Heart right ventricle (tissue), 16 donors: ENCODE measurements at regions of chr22 and their contacts with region 1.

Region 1: GRCh38 chr22:49930739-49931412 is 12.4 kb downstream of the CRELD2 start:
- DNase-seq: peak in 1 of 2 donors; percentile 83
- ATAC-seq: peak; percentile 14 to 74 (median 46)
- H3K4me3 ChIP-seq: no peak overlapping the region
- H3K27ac ChIP-seq: peak overlapping the region in 7 of 10 donors; percentile 2 to 99 (median 44)
- H3K4me1 ChIP-seq: peaks cover 24 to 60% (median 54%) of the 10 kb centered on the region in 9 donors
- H3K27me3 ChIP-seq: peaks cover 0 to 10% (median 6%) of the 10 kb centered on the region in 7 donors
- CTCF ChIP-seq: peak; percentile 49 to 85 (median 79)

Region 2: DNA sequence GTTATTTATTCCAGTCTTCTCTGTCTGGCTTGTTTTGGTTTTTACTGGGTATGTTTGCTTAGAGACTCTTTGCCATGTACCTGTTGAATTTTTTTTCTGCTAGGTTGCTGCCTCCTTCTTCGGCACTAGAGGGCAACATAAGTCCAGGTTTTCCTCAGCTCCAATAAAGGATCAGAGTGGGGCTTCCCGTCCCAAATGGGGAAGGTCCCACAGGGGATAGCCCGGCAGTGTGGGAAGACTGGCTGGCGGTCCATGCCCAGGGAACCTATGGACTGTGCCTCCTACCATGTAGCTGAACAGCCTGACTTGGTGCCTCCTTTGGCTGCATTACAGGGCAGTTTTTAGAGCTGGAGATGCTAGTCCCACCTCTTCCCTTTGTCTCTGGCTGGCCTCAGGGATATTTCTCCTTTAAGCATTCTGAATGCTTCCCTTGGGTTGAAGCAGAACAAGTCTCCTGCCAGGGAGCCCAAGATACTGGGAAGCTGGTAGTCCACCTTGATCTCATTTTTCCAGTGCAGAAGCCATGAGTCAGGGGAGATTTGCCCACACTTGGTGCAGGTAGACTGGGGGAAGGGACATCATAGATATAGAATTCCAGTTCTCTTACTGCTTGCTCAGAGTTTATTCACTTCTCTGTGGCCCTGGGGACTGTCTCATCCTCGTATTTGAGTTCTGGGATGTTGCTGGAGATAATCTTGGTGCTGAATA is 163.4 kb before region 1 on chr22:
- intact Hi-C with region 1: loop called in 1 of 10 experiments (anchors 5 kb)
- DNase-seq: no peak
- ATAC-seq: peak in 3 of 8 donors; percentile 23 to 33 (median 24)
- H3K4me3 ChIP-seq: no peak overlapping the region
- H3K27ac ChIP-seq: no peak overlapping the region
- H3K4me1 ChIP-seq: peaks cover 0 to 10% (median 0%) of the 10 kb centered on the region in 9 donors
- H3K27me3 ChIP-seq: no peaks in the 10 kb centered on the region
- CTCF ChIP-seq: peak in 8 of 9 donors; percentile 30 to 75 (median 60)

Region 3: GRCh38 chr22:49970528-49971231 is 39.8 kb after region 1 on chr22:
- intact Hi-C with region 1: loop called in 5 of 10 experiments (anchors 2 to 5 kb)
- DNase-seq: peak; percentile 92 to 94
- ATAC-seq: peak; percentile 85 to 92 (median 90)
- H3K4me3 ChIP-seq: peak overlapping the region; percentile 35 to 60 (median 54)
- H3K27ac ChIP-seq: peak overlapping the region; percentile 8 to 99 (median 86)
- H3K4me1 ChIP-seq: peaks cover 18 to 60% (median 45%) of the 10 kb centered on the region in 9 donors
- H3K27me3 ChIP-seq: peaks cover 0 to 10% (median 0%) of the 10 kb centered on the region in 7 donors
- CTCF ChIP-seq: no peak

Region 4: GRCh38 chr22:49992921-49993648 is 62.2 kb after region 1 on chr22:
- intact Hi-C with region 1: loop called in 9 of 10 experiments (anchors 1 to 10 kb)
- DNase-seq: peak; percentile 54 to 73
- ATAC-seq: peak; percentile 73 to 90 (median 85)
- H3K4me3 ChIP-seq: no peak overlapping the region
- H3K27ac ChIP-seq: no peak overlapping the region
- H3K4me1 ChIP-seq: peaks cover 0 to 9% (median 2%) of the 10 kb centered on the region in 9 donors
- H3K27me3 ChIP-seq: no peaks in the 10 kb centered on the region
- CTCF ChIP-seq: peak; percentile 61 to 84 (median 72)

Region 5: DNA sequence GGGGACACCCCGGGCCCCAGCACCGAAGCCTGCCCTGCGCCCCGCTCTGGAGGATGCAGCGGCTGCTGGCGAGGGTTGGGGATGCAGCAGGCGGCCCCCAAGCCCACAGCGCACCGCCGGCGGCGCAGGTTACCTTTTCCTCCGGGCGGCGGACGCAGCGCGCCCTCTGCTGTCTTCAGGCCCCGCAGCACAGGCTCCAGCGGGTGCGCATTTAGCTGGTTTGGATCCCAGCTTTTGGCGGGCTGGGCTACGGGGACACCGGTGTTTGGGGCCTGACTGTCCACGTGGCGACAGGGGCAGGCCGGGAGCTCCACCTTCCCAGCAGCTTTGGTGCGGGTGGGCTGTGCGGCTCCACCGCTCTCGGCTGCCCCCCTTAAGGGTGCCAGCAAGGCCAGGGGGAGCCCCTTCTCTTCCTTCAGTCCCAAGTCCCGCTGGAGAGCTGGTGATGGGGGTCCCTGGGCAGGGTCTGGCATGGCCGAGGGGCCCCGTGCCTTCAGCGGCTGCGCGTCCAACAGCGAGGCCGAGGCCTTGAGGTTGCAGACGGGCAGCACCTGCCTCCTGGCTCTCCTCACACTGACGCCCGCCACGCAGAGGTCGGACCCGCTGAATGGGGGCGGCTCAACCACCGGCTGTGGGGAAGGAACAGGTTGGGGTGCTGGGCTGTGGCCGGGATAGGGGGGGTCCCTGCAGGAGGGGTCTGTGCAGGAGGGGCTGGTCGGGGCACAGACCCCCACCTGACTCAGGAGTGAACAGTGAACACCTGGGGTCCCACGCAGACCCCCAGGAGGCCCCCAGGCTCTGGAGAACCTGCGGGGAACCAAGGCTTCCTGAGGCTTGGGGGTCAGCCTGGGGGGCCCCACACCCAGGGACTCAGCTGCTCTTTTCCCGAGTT is 99.7 kb after region 1 on chr22:
- intact Hi-C with region 1: loop called (anchors 1 to 2 kb)
- DNase-seq: peak; percentile 58 to 71
- ATAC-seq: peak; percentile 83 to 93 (median 88)
- H3K4me3 ChIP-seq: no peak overlapping the region
- H3K27ac ChIP-seq: no peak overlapping the region
- H3K4me1 ChIP-seq: peaks cover 0 to 9% (median 5%) of the 10 kb centered on the region in 9 donors
- H3K27me3 ChIP-seq: peaks cover 0 to 72% (median 50%) of the 10 kb centered on the region in 7 donors
- CTCF ChIP-seq: peak; percentile 84 to 93 (median 88)

Region 6: DNA sequence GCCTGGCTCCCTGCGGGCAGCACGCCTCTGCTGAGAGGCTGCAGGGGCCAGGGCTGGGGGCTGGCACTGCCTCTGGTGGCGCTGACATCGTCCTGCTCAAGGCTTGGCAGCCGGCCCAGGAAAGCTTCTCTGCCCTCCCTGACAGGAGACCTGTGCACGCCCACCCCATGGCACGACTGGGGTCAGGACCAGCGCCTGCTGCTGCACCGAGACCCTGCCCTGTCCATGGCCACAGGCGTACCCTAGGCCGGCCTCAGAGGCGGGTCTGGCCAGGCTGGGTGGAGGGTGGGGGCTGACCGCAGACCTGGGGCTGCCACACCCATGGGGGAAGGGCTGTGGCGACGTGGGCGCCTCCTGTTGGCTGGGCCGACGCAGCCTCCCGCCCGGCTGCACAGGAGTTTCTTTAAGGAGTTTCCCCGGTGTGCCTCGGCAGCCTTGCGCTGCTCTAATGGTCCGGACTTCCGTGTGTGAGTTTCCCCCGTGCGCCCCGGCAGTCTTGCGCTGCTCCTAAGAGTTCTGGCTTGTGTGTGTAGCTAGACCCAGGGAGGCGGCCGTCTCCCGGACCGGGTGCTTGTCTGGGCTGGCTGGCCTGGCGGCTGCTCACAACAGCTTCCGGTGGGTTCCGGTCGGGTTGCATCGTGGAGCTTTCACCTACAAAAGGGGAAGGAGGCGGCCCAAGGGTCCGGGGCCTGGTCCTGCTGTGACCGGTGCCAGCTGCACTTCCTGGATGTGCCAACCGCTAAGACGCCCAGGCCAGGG is 259.5 kb after region 1 on chr22:
- intact Hi-C with region 1: loop called in 1 of 10 experiments (anchors 10 kb)
- DNase-seq: peak; percentile 77 to 85
- ATAC-seq: peak; percentile 31 to 77 (median 72)
- H3K4me3 ChIP-seq: peak overlapping the region in 9 of 10 donors; percentile 27 to 63 (median 54)
- H3K27ac ChIP-seq: peak overlapping the region; percentile 13 to 97 (median 79)
- H3K4me1 ChIP-seq: peaks cover 10 to 68% (median 44%) of the 10 kb centered on the region in 9 donors
- H3K27me3 ChIP-seq: no peaks in the 10 kb centered on the region
- CTCF ChIP-seq: peak in 7 of 9 donors; percentile 21 to 65 (median 56)

Region 7: DNA sequence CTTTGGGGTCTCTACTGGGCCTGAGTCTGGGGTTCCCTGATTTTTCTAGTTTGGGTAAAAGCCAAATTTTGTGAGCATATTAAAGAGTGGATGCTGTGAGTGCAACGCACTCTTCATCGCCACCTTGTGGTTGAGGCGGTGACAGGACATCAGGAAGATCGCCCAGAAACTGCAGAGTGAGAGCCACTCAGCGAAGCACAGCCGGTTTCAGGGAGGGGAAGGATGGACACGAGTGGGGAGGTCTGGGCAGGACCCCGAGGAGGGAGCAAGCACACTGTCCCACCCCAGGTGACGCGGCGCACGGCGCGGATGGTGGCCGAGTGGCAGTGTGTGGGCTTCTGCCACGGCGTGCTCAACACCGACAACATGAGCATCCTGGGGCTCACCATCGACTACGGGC is 279.0 kb after region 1 on chr22:
- intact Hi-C with region 1: loop called in 3 of 10 experiments (anchors 5 to 10 kb)
- DNase-seq: peak in 1 of 2 donors; percentile 58
- ATAC-seq: peak in 7 of 8 donors; percentile 15 to 55 (median 34)
- H3K4me3 ChIP-seq: no peak overlapping the region
- H3K27ac ChIP-seq: no peak overlapping the region
- H3K4me1 ChIP-seq: peaks cover 13 to 36% (median 23%) of the 10 kb centered on the region in 9 donors
- H3K27me3 ChIP-seq: no peaks in the 10 kb centered on the region
- CTCF ChIP-seq: peak; percentile 74 to 86 (median 83)